ENCODE measurements at regions of chr12 and their contacts with region 1.

Region 1: GRCh38 chr12:96215919-96216273 is 21.7 kb downstream of the ELK3 start:
- DNase-seq: no peak
- H3K4me3 ChIP-seq: no peak overlapping the region
- H3K4me3 Mint-ChIP-seq: peak overlapping the region; percentile 42
- H3K27ac Mint-ChIP-seq: no peak overlapping the region
- H3K4me1 ChIP-seq: no peaks in the 10 kb centered on the region
- H3K4me1 Mint-ChIP-seq: no peaks in the 10 kb centered on the region
- H3K27me3 ChIP-seq: no peaks in the 10 kb centered on the region
- H3K27me3 Mint-ChIP-seq: no peaks in the 10 kb centered on the region
- CTCF ChIP-seq: no peak

Region 2: GRCh38 chr12:96035278-96036236 is 180.3 kb before region 1 on chr12 and contains the start of gene LTA4H:
- CTCF ChIA-PET with region 1: interaction called, 4 read pairs
- POLR2A ChIA-PET with region 1: no interaction called
- intact Hi-C with region 1: loop called (anchors 1 kb)
- DNase-seq: peak; percentile 95 to 98
- H3K4me3 ChIP-seq: peak within 1 kb of the TSS; percentile 62
- H3K4me3 Mint-ChIP-seq: no peak within 1 kb of the TSS
- H3K27ac Mint-ChIP-seq: no peak within 1 kb of the TSS
- H3K4me1 ChIP-seq: peaks cover 10% of the 10 kb centered on the region
- H3K4me1 Mint-ChIP-seq: no peaks in the 10 kb centered on the region
- H3K27me3 ChIP-seq: no peaks in the 10 kb centered on the region
- H3K27me3 Mint-ChIP-seq: no peaks in the 10 kb centered on the region
- CTCF ChIP-seq: no peak
- total RNA-seq, gene LTA4H: 56.7 and 61.9 TPM in 2 replicates

Region 3: DNA sequence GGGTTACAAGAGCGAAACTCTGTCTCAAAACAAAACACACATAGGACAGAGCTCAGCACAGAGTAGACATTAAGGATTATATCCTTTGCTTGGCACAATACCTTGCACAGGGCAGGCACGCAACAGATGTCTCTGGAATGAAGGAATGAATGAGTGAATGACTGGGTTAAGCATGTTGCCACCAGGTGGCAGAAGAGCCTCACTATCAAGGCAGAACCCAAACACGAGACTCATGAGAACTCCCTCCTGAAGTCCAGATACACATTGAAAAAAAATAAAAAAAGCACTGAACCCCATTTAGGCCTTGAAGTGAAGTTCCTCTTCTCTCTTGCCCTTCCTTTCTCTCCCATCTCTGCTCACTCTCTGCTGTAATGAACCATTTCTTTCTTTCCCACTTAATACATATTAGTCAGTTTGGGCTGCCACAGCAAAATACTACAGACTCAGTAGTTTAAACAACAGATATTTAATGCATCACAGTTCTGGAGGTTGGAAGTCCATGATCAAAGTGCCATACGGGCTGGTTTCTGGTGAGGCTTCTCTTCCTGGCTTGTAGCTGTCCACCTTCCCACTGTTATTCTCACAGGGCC is 153.9 kb before region 1 on chr12:
- CTCF ChIA-PET with region 1: interaction called, 9 read pairs
- POLR2A ChIA-PET with region 1: no interaction called
- intact Hi-C with region 1: loop called (anchors 1 kb)
- DNase-seq: peak; percentile 74 to 76
- H3K4me3 ChIP-seq: no peak overlapping the region
- H3K4me3 Mint-ChIP-seq: no peak overlapping the region
- H3K27ac Mint-ChIP-seq: no peak overlapping the region
- H3K4me1 ChIP-seq: no peaks in the 10 kb centered on the region
- H3K4me1 Mint-ChIP-seq: no peaks in the 10 kb centered on the region
- H3K27me3 ChIP-seq: no peaks in the 10 kb centered on the region
- H3K27me3 Mint-ChIP-seq: no peaks in the 10 kb centered on the region
- CTCF ChIP-seq: peak; percentile 78 to 85

Region 4: GRCh38 chr12:96132819-96133218 is 83.1 kb before region 1 on chr12:
- CTCF ChIA-PET with region 1: interaction called, 6 read pairs
- POLR2A ChIA-PET with region 1: no interaction called
- intact Hi-C with region 1: loop called (anchors 1 kb)
- DNase-seq: peak; percentile 45 to 55
- H3K4me3 ChIP-seq: no peak overlapping the region
- H3K4me3 Mint-ChIP-seq: no peak overlapping the region
- H3K27ac Mint-ChIP-seq: no peak overlapping the region
- H3K4me1 ChIP-seq: peaks cover 18% of the 10 kb centered on the region
- H3K4me1 Mint-ChIP-seq: peaks cover 13% of the 10 kb centered on the region
- H3K27me3 ChIP-seq: no peaks in the 10 kb centered on the region
- H3K27me3 Mint-ChIP-seq: no peaks in the 10 kb centered on the region
- CTCF ChIP-seq: peak; percentile 43 to 50

Region 5: GRCh38 chr12:96194971-96195844 is 20.7 kb before region 1 on chr12:
- CTCF ChIA-PET with region 1: interaction called, 3 read pairs
- POLR2A ChIA-PET with region 1: no interaction called
- intact Hi-C with region 1: loop called (anchors 2 kb)
- DNase-seq: no peak
- H3K4me3 ChIP-seq: peak overlapping the region; percentile 45
- H3K4me3 Mint-ChIP-seq: peak overlapping the region; percentile 98
- H3K27ac Mint-ChIP-seq: no peak overlapping the region
- H3K4me1 ChIP-seq: no peaks in the 10 kb centered on the region; the same call in 1 of the 2 replicates
- H3K4me1 Mint-ChIP-seq: peaks cover 6% of the 10 kb centered on the region
- H3K27me3 ChIP-seq: peaks cover 2% of the 10 kb centered on the region; the same call in 1 of the 2 replicates
- H3K27me3 Mint-ChIP-seq: peaks cover 14% of the 10 kb centered on the region
- CTCF ChIP-seq: no peak

Region 6: GRCh38 chr12:96399919-96400797 is 184.3 kb after region 1 on chr12 and contains the start of gene CDK17:
- CTCF ChIA-PET with region 1: interaction called, 7 read pairs
- POLR2A ChIA-PET with region 1: no interaction called
- intact Hi-C with region 1: loop called (anchors 2 kb)
- DNase-seq: peak; percentile 80 to 83
- H3K4me3 ChIP-seq: peak within 1 kb of the TSS; percentile 69
- H3K4me3 Mint-ChIP-seq: peak within 1 kb of the TSS; percentile 96
- H3K27ac Mint-ChIP-seq: peak within 1 kb of the TSS; percentile 84
- H3K4me1 ChIP-seq: 0 out of 2 replicates have a peak, but pooled peaks cover 9% of the 10 kb centered on the region
- H3K4me1 Mint-ChIP-seq: peaks cover 18% of the 10 kb centered on the region
- H3K27me3 ChIP-seq: no peaks in the 10 kb centered on the region
- H3K27me3 Mint-ChIP-seq: no peaks in the 10 kb centered on the region
- CTCF ChIP-seq: peak in 1 of 2 experiments; percentile 37
- total RNA-seq, gene CDK17: 11.5 and 11.7 TPM in 2 replicates

Region 7: DNA sequence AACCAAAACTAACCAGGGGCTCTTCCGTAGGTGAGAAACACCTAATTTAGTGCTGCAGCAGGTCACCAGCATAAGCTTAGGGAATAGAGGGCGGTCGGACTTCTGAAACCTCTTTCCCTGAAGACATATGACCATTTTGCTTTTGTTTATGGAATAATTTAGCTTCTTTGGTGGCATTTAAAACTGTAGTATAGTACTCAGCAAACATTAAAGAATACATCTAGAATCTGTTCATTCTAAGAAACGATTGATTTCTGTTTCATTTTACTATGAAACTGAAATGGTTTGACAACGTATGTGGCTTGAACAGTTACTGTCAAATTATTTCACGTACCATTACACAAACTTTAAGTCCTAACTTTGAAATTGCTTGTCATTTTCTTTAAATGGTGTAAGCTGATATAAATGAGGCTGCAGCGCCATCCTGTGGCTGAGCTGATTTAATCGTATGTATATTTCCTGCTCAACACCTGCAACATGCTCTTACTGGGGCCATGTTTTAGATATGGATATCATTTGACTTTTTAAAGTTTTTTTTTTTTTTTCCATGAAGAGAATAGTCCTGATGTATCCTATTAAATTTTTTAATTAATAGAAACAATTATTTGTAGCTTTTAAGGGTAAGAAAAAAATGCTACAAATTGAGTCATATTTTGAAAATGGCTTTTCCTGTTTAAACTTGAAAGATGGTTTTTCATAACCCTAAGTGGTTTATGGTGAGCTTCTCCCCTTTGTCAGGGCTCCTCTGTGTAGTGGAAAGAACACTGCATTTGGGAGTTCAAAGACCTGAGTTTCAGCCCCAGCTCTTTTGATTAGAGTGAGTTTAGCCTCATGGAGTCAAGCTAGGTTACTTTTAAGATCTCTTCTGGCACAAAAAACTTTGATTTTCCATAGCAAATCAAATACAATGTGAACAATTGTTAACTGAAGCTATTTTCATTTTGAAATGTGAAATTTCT is 300.9 kb after region 1 on chr12:
- CTCF ChIA-PET with region 1: interaction called, 11 read pairs
- POLR2A ChIA-PET with region 1: no interaction called
- intact Hi-C with region 1: loop called (anchors 2 kb)
- DNase-seq: peak; percentile 51 to 65
- H3K4me3 ChIP-seq: no peak overlapping the region
- H3K4me3 Mint-ChIP-seq: no peak overlapping the region
- H3K27ac Mint-ChIP-seq: no peak overlapping the region
- H3K4me1 ChIP-seq: no peaks in the 10 kb centered on the region
- H3K4me1 Mint-ChIP-seq: no peaks in the 10 kb centered on the region
- H3K27me3 ChIP-seq: no peaks in the 10 kb centered on the region
- H3K27me3 Mint-ChIP-seq: no peaks in the 10 kb centered on the region
- CTCF ChIP-seq: peak; percentile 31 to 60